HEK293T (cell line): ENCODE measurements at regions of chr5 and their contacts with region 1.

Region 1: GRCh38 chr5:150700594-150701293 is at the start of gene RBM22:
- DNase-seq: peak; percentile 90

Region 2: DNA sequence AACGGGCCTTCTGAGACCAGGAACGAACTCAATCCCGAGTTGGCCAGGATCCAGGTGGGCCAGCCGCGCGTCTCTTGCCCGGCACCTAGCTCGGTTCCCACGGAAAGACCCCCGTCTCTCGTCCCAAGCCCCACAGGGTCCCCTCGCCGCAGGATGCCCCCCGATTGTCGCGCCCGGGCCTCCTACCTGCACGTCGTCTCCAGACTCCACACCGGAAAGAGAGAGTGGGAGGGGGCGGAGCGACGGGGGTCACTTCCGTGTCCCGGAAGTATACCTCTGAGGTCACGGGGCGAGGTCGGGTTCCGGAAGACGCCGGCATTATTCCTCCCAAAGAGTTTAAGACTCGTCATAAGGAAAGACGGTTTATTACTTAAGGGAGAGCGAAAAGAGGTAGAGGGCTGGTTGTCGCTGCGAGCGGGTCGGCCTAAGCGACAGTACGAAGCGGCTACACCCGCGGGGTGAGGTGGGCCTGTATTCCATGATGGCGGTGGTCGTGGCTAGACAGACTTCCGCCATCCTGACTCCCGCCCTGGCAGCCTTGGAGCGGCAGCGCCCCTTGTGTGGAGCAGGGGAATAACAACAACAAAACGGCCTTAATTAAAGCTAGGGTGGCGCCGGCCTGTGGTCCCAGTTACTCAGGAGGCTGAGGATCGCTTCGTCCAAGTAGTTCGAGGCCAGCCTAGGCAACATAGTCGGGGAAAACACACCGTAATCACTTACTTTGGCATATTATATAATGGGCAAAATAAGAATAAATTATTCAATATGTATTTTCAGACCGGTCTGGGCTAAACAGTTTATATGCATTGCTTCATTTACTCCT is 251.0 kb before region 1 on chr5 and contains the start of gene RPS14:
- CTCF ChIA-PET with region 1: interaction called, 4 read pairs
- POLR2A ChIA-PET with region 1: interaction called, 18 read pairs
- DNase-seq: peak; percentile 93

Region 3: DNA sequence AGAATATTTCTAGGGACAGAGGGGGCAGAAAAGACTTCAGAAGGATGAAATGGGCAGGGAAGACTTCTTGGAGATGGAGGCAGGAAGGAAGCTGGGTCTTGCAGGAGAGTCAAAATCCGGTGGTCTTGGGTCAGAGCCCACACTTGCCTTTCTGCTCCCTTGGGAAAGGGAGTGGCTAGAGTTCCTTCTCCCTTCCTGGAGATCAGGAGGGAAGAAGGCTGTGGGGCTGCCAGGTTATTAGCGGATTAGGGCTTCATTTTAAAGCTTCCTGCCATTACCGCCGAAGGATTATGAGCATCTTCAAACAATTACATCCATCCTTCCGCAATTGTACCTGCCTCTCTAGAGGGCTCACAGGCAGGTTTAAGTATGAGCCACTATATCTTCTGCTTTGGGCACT is 79.4 kb before region 1 on chr5:
- CTCF ChIA-PET with region 1: no interaction called
- POLR2A ChIA-PET with region 1: no interaction called
- DNase-seq: no peak

Region 4: GRCh38 chr5:150642567-150642927 is 58.2 kb before region 1 on chr5:
- CTCF ChIA-PET with region 1: interaction called, 3 read pairs
- POLR2A ChIA-PET with region 1: interaction called, 10 read pairs
- DNase-seq: no peak

Region 5: GRCh38 chr5:150665044-150665443 is 35.7 kb before region 1 on chr5:
- CTCF ChIA-PET with region 1: no interaction called
- POLR2A ChIA-PET with region 1: interaction called, 43 read pairs
- DNase-seq: no peak

Region 6: DNA sequence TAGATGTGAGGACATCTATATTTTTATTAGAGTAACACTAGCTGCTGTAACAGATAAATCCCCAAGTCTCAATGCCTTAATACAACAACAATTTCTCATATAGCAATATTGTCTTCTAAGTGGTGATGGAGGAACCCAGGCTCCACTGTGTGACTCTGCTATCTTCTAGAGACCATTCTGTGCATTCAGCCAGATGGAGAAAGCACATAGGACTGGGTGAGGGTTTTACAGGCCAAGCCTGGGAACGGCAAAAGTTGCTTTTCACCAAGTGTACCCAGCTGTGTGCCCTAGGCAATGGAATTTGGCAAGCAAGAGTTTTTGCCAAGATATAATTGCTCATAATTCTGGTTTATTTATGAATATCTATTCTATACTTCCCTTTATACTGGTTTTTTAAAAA is 11.6 kb before region 1 on chr5:
- CTCF ChIA-PET with region 1: interaction called, 3 read pairs
- POLR2A ChIA-PET with region 1: interaction called, 19 read pairs
- DNase-seq: no peak

Region 7: DNA sequence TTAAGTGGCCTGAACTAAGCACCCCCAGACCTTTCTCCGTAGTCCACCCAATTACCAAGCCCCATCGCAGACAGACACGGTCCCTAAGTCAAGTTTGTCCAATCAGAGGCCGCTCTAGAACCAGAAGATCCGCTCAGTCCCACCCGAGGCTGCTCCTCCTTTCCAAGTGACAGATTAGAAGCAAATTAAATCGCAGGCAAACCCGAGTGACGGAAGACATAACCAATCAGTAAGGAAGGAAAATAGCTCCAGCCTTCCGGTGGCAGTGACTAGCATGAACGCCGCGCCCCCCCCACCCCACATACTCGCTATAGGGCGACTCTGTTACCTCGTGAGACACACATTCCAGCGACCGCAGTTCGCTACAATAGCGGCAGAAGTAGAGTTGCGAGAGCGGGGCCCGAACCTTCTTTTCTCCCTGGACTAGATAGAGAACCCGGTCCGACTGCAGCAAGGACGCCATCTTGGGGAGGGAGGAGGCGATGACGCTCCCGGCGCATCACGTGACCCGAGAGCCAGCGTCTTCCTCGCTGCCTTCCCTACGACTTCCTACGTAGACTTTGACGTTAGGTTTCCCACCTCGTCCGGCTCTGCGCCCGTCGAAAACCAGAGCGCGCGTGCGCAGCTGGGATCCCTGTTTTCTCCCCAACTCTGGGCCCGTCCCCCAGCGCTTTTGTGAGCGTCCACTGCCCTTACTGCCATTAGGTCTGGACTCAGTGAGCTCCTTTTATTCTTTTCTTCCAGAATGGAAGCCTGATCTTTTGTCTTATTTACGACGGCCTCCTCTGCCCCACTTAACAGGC is 58.0 kb after region 1 on chr5 and contains the start of gene DCTN4:
- CTCF ChIA-PET with region 1: no interaction called
- POLR2A ChIA-PET with region 1: interaction called, 34 read pairs
- DNase-seq: peak; percentile 92